Vagina (tissue), 2 donors: ENCODE measurements at regions of chr1 and their contacts with region 1.

Region 1: DNA sequence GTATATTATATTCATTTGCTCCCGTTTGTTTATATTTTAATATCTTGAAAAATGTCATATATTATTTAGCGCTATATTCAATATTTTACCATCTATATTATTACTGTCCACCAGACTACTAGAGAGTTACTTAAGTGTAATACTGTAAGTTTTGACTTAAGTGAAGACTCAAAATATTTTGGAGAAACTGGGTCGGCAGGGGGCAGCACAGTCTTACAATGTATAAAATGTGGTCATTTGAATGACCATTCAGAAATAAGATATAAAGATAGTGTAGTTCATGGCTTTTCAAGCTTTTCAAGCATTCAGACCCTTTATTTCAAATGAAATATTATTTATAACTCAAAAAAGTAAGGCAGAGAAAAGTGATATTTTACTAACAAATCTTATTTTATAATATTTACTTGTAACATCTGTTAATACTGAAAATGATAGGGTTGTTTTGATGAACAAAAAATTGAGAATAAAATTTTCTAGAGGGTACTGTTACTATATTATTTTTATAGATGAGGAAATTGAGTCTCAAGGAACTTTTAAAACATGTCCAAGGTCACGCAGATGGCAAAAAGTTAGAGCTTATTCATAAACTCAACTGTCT is 89.0 kb upstream of the SERTAD4 start:
- DNase-seq: no peak
- H3K4me3 ChIP-seq: no peak overlapping the region
- H3K27ac ChIP-seq: no peak overlapping the region
- H3K4me1 ChIP-seq: no peaks in the 10 kb centered on the region
- H3K27me3 ChIP-seq: no peaks in the 10 kb centered on the region
- CTCF ChIP-seq: peak in 2 of 3 experiments; percentile 64 to 69
- POLR2A ChIP-seq: no peak

Region 2: DNA sequence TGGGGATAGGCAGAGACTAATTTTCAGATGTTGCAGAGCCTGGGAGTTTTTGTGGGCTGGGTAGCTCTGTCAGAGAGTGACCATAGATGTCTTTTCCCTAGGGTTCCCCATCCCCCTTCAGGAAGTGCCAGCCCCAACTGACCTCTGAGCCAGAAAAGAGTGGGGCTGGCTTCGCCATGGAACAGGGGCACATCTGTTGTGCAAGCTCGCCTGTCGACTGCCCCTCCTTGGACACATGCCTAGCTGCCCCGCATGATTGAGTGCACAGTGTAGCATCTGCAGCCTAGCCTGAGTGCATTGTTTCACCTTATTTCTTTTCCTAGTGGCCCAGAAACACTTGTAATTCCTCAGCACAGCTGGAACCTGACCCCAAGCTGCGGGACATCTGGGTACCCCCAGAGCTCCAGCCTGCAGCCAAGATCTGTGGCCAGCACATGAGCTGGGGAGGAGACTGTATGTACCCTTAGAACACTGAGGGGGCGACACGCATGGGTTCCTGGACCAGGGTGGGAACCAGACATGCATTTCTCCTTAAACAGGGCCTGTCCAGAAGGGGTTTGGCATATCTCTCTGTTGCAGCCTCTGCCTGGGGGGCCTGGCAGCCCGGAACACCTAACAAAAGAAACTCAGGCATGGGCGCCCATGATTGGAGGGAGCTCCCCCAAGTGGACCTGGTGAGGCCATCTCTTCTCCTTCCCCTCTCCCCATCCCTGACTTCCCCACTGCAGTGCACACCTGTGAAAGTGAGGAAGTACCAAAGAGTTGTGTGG is 150.3 kb before region 1 on chr1:
- intact Hi-C with region 1: no loop called
- DNase-seq: no peak
- H3K4me3 ChIP-seq: no peak overlapping the region
- H3K27ac ChIP-seq: no peak overlapping the region
- H3K4me1 ChIP-seq: no peaks in the 10 kb centered on the region
- H3K27me3 ChIP-seq: no peaks in the 10 kb centered on the region
- CTCF ChIP-seq: no peak
- POLR2A ChIP-seq: no peak

Region 3: GRCh38 chr1:210072129-210072528 is 71.4 kb before region 1 on chr1:
- intact Hi-C with region 1: no loop called
- DNase-seq: no peak
- H3K4me3 ChIP-seq: no peak overlapping the region
- H3K27ac ChIP-seq: no peak overlapping the region
- H3K4me1 ChIP-seq: no peaks in the 10 kb centered on the region
- H3K27me3 ChIP-seq: no peaks in the 10 kb centered on the region
- CTCF ChIP-seq: no peak
- POLR2A ChIP-seq: no peak

Region 4: DNA sequence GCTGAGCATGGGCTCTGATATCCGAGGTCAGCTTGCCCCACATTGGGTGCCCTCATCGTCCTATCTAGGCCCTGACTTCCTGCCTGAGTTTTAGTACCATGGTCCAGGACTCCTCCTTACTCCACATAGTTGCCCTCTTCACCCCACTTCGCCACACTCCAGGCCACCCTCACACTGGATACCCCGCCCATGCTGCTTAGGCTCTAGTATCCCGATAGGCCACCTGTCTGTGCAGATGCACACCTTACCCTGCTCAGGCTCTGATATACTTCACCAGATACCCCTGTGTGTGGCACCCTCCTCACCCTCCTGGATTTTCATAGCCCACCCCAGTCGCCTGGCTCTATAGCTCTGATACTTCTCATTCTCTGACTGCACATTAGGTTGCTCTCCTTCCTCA is 56.5 kb before region 1 on chr1:
- intact Hi-C with region 1: no loop called
- DNase-seq: no peak
- H3K4me3 ChIP-seq: no peak overlapping the region
- H3K27ac ChIP-seq: no peak overlapping the region
- H3K4me1 ChIP-seq: no peaks in the 10 kb centered on the region
- H3K27me3 ChIP-seq: no peaks in the 10 kb centered on the region
- CTCF ChIP-seq: no peak
- POLR2A ChIP-seq: no peak

Region 5: DNA sequence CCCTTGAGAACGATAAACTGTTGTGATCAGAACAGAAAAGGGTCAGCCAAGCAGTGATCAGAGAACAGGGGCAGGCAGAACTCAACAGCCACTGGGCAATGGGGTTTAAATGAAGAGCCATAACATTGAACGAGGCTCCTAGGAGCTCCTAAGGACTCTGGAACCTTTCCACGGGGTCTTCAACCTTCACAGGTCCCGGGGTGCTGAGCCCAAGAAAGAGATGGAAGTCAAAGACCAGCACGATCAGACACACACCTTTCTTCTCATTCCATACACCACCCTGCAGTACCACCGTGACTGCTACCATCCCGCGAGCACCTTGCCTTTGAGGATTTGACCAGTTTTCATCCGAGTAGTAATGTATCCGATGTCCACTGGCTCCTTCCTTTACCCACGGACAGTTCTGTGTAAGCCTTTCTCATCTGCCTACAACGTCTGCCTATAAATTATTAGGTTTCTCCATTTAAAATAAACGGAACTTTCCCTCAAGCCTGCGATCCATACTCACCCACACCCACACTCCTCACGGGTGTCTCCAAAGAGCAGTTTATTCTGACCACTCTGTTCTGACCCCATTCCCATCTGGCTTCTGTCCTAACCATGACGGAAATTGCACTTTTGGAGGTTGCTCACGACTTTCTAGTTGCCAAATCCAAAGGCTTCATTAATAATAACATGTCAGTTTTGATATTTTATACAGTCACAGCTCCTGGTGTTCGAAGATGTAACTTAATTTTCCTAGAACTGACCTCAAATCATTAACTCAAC is 168.3 kb after region 1 on chr1:
- intact Hi-C with region 1: loop called (anchors 2 kb)
- DNase-seq: peak; percentile 52 to 83
- H3K4me3 ChIP-seq: peak overlapping the region; percentile 35 to 46
- H3K27ac ChIP-seq: peak overlapping the region; percentile 68
- H3K4me1 ChIP-seq: peaks cover 21% of the 10 kb centered on the region
- H3K27me3 ChIP-seq: no peaks in the 10 kb centered on the region
- CTCF ChIP-seq: no peak
- POLR2A ChIP-seq: no peak

Region 6: GRCh38 chr1:210323957-210324356 is 180.4 kb after region 1 on chr1:
- intact Hi-C with region 1: no loop called
- DNase-seq: no peak
- H3K4me3 ChIP-seq: no peak overlapping the region
- H3K27ac ChIP-seq: no peak overlapping the region
- H3K4me1 ChIP-seq: peaks cover 9% of the 10 kb centered on the region
- H3K27me3 ChIP-seq: no peaks in the 10 kb centered on the region
- CTCF ChIP-seq: no peak
- POLR2A ChIP-seq: no peak

Region 7: DNA sequence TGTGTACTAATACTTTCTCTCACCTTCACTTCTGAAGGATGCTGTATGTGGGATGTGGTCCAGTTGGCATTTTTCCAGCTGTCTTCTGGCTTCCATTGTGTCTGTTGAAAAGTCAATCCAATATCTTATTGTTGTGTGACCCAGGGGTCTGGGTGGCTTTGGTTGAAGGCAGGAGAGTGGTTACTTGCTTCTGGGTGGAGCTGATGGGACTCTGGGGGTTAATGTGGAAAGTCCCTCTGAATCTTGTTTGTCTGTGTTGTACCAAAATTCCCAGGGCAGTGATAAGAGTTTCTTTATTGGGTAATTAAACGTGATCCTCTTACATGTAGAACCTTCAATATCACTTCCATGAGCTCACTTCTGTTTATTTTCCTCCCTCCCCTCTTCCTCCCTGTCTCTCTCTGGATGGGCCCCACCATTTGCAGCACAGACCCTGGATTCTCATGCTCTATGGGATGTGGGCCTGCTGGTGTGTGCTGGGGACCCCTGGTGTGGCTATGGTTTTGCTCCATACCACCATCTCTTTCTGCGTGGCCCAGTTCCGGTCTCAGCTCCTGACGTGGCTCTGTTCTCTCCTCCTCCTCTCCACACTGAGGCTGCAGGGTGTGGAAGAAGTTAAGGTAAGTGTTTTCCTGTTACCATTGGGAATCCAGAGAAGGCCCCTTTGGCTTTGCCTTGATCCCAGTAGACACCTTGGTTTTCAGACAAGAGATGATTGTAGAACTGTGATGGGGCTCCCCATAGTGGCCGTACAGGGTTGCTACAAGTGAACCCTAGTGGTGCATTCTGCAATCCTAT is 256.7 kb after region 1 on chr1:
- intact Hi-C with region 1: loop called (anchors 10 kb)
- DNase-seq: no peak
- H3K4me3 ChIP-seq: no peak overlapping the region
- H3K27ac ChIP-seq: no peak overlapping the region
- H3K4me1 ChIP-seq: no peaks in the 10 kb centered on the region
- H3K27me3 ChIP-seq: no peaks in the 10 kb centered on the region
- CTCF ChIP-seq: peak; percentile 41 to 77 (median 53)
- POLR2A ChIP-seq: no peak